ENCODE measurements at regions of chr10 and their contacts with region 1.

Region 1: GRCh38 chr10:53601260-53601875 is 828.8 kb upstream of the MBL2 start:
- DNase-seq: peak; percentile 58
- H3K4me3 Mint-ChIP-seq: no peak overlapping the region
- H3K27ac Mint-ChIP-seq: no peak overlapping the region
- H3K4me1 Mint-ChIP-seq: no peaks in the 10 kb centered on the region
- H3K27me3 Mint-ChIP-seq: no peaks in the 10 kb centered on the region

Region 2: DNA sequence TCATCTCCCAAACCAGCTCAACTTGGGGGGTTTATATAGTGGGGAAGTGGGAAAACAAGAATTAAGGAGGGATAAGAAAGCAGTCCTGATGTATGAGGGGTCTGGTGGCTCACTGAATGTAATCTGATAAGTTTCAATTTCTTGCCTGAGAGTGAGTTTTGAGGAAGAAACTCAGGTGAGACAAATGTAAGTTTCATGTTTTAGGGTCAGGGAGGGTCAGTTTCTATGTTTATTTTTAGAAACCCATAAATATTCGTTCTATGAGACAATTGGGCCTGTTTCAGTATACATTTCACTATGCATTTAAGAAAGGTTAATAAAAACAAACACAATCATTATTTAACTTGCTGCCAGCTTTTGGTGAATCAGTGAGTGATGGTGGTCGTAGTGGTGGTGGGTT is 700.8 kb before region 1 on chr10:
- intact Hi-C with region 1: no loop called
- DNase-seq: no peak
- H3K4me3 Mint-ChIP-seq: no peak overlapping the region
- H3K27ac Mint-ChIP-seq: no peak overlapping the region
- H3K4me1 Mint-ChIP-seq: no peaks in the 10 kb centered on the region
- H3K27me3 Mint-ChIP-seq: no peaks in the 10 kb centered on the region

Region 3: DNA sequence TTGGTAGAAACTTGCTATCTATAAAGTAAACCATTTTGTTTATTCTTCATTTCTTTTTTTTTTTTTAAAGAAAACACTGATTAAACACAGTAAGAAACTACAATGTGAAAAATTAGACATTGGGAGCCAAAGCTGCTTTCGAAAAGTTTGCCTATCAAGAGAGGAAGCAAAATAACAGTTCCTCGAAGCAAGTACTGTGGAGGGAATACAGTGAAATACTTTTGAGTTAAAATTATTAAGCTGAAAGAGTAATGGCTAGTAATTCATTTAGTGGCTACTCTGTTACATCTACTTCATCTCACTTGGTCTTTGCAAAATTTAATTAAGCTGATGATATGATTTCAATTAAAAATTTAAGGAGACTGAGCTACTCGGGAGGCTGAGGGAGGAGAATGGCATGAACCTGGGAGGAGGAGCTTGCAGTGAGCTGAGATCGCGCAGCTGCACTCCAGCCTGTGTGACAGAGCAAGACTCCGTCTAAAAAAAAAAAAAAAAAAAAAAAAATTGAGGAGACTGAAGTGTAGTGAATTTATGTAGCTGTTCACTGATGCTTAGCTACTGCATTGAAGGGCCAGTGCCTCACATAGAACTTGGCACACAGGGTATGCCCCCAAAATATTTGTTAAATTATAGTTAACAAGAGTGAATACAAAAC is 153.4 kb after region 1 on chr10:
- intact Hi-C with region 1: no loop called
- DNase-seq: no peak
- H3K4me3 Mint-ChIP-seq: no peak overlapping the region
- H3K27ac Mint-ChIP-seq: no peak overlapping the region
- H3K4me1 Mint-ChIP-seq: no peaks in the 10 kb centered on the region
- H3K27me3 Mint-ChIP-seq: no peaks in the 10 kb centered on the region

Region 4: DNA sequence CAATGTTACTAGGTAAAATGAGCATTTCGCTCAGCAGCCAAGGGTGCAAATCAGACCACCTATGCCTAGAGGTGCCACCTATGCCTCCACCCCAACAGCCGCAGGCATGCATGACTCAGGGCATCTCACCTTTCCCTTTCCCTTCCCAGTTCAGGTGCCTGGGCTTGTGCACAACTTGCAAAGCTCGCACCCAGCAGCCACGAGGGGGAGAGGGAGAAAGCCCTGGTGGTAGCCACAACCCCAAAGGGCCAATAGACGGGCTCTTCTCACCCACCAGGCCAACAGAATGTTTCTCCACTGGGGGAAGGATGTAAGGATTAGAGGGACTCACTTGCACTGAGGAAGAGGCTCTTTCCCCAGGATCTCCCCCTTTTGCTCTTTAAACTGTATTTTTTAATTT is 1662.0 kb after region 1 on chr10:
- intact Hi-C with region 1: loop called (anchors 10 kb)
- DNase-seq: no peak
- H3K4me3 Mint-ChIP-seq: no peak overlapping the region
- H3K27ac Mint-ChIP-seq: no peak overlapping the region
- H3K4me1 Mint-ChIP-seq: no peaks in the 10 kb centered on the region
- H3K27me3 Mint-ChIP-seq: no peaks in the 10 kb centered on the region